ENCODE measurements at regions of chr14 and their contacts with region 1.

Region 1: DNA sequence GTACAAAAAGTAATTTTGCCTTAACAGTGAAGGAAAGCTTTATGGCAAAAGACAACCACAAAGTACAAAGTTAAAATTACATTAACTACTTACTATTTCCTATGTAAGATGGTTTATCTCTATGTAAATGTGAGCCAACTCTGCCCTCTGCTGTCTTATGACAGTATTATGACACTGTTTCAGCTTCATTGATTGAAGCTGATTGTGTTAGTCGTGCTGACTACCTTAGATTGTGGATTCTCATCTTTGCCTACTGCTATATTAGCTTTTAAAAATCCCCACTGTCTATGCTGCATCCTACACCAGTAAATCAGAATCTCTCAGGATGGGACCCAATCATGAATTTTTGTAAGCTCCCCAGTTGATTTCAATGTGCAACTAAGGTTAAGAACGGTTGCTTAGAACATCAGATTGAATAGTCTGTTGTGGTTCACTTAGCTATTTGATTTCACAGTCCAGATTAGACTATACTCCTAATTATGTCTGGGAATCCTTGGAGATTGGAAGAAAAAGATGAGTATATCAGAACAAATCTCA is 12.2 kb upstream of the SPTB start:
- DNase-seq: peak; percentile 72
- H3K4me3 ChIP-seq: no peak overlapping the region
- H3K27ac ChIP-seq: no peak overlapping the region
- H3K4me1 ChIP-seq: no peaks in the 10 kb centered on the region
- H3K27me3 ChIP-seq: peaks cover 10 to 24% of the 10 kb centered on the region in 2 experiments
- CTCF ChIP-seq: peak; percentile 31 to 42
- POLR2A ChIP-seq: no peak

Region 2: DNA sequence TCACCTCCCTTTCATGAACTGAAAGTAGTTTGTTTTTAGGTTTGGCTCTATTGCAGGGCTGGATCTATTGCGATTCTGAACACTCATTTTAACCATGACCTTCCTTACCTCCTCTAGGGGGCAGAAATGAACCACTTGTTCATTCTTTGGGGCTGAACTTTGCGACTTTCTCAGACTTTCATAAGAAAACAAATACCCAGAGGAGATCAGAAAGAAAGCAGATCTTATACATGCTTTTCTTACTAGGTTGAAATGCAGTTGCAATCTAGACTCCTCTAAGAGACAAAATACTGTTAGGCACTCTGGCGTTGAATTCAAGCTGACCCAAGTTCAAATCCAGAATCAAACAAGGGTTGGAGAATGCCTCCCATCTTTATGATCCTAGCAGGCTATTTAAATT is 220.3 kb before region 1 on chr14:
- CTCF ChIA-PET with region 1: interaction called, 51 read pairs
- POLR2A ChIA-PET with region 1: no interaction called
- dilution Hi-C with region 1: no loop called
- intact Hi-C with region 1: loop called (anchors 2 kb)
- DNase-seq: peak; percentile 59
- H3K4me3 ChIP-seq: no peak overlapping the region
- H3K27ac ChIP-seq: no peak overlapping the region
- H3K4me1 ChIP-seq: no peaks in the 10 kb centered on the region
- H3K27me3 ChIP-seq: peaks cover 5 to 10% of the 10 kb centered on the region in 2 experiments
- CTCF ChIP-seq: peak; percentile 40 to 66
- POLR2A ChIP-seq: no peak

Region 3: DNA sequence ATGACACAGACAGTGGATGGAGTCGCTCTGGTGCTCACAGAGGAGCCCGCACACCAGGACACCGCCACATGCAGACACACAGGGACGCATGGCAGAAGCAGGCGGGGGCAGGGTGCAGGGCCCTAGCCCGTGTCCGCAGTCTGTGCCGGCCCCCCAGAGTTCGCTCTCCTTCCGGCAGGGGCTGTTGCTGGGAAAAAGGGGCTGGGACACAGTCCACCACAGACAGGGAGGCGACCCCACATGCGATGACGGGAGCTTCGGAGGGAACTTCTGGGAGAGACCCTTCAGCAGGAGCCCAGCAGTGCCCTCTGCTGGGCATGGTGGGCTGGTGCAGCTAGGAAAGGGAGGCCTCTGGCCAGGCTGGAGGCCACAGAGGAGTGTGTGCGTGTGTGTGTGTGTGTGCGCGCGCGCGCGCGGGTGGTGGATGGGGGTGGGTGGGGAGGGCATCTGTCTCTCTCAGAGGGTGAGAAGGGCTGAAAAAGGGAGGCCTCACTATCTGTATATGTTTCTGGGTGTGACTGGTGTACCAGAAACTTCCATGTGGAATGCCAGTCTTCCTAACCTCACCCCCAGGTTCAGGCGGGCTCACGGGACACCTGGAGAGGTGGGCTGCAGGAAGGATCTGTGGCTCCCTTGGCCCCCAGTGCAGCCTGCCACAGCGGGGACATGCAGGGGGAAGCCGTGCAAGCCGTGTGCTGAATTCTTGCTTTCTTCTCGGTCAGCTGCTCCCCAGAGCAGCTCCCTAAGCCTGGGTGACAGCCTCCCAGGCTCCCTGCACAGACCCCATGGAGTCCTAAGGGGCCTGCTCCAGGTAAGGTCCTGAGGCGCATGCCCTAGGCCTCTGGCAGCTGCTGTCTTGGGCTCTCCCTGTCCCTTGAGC is 127.0 kb before region 1 on chr14:
- CTCF ChIA-PET with region 1: interaction called, 14 read pairs
- POLR2A ChIA-PET with region 1: no interaction called
- dilution Hi-C with region 1: no loop called
- intact Hi-C with region 1: loop called (anchors 2 kb)
- DNase-seq: peak; percentile 74
- H3K4me3 ChIP-seq: no peak overlapping the region
- H3K27ac ChIP-seq: peak overlapping the region; percentile 30
- H3K4me1 ChIP-seq: peaks cover 21% of the 10 kb centered on the region
- H3K27me3 ChIP-seq: no peaks in the 10 kb centered on the region
- CTCF ChIP-seq: peak; percentile 80 to 97
- POLR2A ChIP-seq: no peak

Region 4: GRCh38 chr14:64800000-64800399 is 91.9 kb before region 1 on chr14:
- CTCF ChIA-PET with region 1: interaction called, 61 read pairs
- POLR2A ChIA-PET with region 1: no interaction called
- dilution Hi-C with region 1: no loop called
- intact Hi-C with region 1: no loop called
- DNase-seq: peak; percentile 38
- H3K4me3 ChIP-seq: no peak overlapping the region
- H3K27ac ChIP-seq: no peak overlapping the region
- H3K4me1 ChIP-seq: no peaks in the 10 kb centered on the region
- H3K27me3 ChIP-seq: peaks cover 0 to 4% of the 10 kb centered on the region in 2 experiments
- CTCF ChIP-seq: peak; percentile 47 to 61
- POLR2A ChIP-seq: no peak

Region 5: GRCh38 chr14:64823305-64823861 is 68.5 kb before region 1 on chr14:
- CTCF ChIA-PET with region 1: interaction called, 120 read pairs
- POLR2A ChIA-PET with region 1: no interaction called
- dilution Hi-C with region 1: no loop called
- intact Hi-C with region 1: loop called (anchors 2 kb)
- DNase-seq: peak; percentile 36
- H3K4me3 ChIP-seq: no peak overlapping the region
- H3K27ac ChIP-seq: no peak overlapping the region
- H3K4me1 ChIP-seq: no peaks in the 10 kb centered on the region
- H3K27me3 ChIP-seq: peaks cover 8 to 19% of the 10 kb centered on the region in 2 experiments
- CTCF ChIP-seq: peak; percentile 70 to 83
- POLR2A ChIP-seq: no peak

Region 6: DNA sequence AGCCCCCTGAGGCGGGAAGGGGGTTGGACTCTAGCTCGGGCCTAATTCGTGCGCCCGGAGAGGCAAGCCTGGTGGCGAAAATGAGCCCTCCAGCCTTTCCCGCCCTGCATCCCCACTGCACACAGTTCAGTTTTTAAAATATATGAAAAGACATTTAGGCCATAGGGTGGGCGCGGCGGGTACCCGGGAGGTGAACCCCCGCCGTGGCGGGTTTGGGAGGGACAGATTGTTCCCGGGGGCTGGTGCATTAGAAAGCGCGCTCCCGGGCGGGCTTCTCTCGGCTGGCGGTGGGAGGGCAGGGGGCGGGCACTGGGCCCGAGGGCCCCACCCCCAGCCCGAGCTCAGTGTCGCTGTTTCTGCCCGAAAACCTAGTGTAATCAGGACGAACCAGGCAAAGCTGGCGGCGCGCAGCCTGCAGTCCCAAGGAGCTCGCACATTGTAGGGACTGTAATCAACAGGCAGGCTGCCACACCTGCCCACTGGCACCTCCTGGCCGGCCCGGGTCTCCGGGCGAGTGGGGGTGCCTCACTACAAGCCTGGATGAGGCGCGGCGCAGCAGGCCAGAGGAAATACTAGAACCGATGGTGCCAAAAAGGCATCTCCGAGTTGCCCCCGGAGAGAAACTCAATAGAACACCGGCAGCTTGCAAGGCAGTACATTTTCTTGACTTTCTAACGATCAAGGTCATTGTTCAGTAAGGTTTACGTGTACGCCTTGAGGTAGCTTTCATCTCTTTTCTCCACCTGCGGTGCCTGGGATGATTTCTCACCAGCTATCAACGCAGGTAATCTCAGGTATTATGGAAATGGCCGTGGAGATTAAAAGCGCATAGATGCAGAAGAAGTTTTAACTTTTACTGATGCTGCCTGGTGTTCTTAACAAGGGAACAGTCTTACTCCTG is 11.4 kb before region 1 on chr14:
- CTCF ChIA-PET with region 1: interaction called, 84 read pairs
- POLR2A ChIA-PET with region 1: no interaction called
- dilution Hi-C with region 1: no loop called
- intact Hi-C with region 1: no loop called
- DNase-seq: peak; percentile 8
- H3K4me3 ChIP-seq: peak overlapping the region; percentile 34 to 40 (median 35)
- H3K27ac ChIP-seq: no peak overlapping the region
- H3K4me1 ChIP-seq: peaks cover 2% of the 10 kb centered on the region
- H3K27me3 ChIP-seq: peaks cover 48 to 82% of the 10 kb centered on the region in 2 experiments
- CTCF ChIP-seq: no peak
- POLR2A ChIP-seq: no peak

Region 7: GRCh38 chr14:64914237-64914971 is 22.5 kb after region 1 on chr14 and contains the start of gene CHURC1:
- CTCF ChIA-PET with region 1: interaction called, 61 read pairs
- POLR2A ChIA-PET with region 1: no interaction called
- dilution Hi-C with region 1: no loop called
- intact Hi-C with region 1: no loop called
- DNase-seq: peak; percentile 98
- H3K4me3 ChIP-seq: peak within 1 kb of the TSS; percentile 80 to 96 (median 94)
- H3K27ac ChIP-seq: peak within 1 kb of the TSS; percentile 81
- H3K4me1 ChIP-seq: peaks cover 16% of the 10 kb centered on the region
- H3K27me3 ChIP-seq: peaks cover 8 to 13% of the 10 kb centered on the region in 2 experiments
- CTCF ChIP-seq: no peak
- POLR2A ChIP-seq: peak; percentile 95
- total RNA-seq, gene CHURC1: 44.0 and 44.4 TPM in 2 replicates